IMR-90 (cell line): ENCODE measurements at regions of chr3 and their contacts with region 1.

Region 1: GRCh38 chr3:18401300-18401961 is 23.7 kb downstream of the SATB1 start:
- DNase-seq: no peak
- ATAC-seq: no peak
- H3K4me3 ChIP-seq: no peak overlapping the region
- H3K27ac ChIP-seq: no peak overlapping the region
- H3K4me1 ChIP-seq: no peaks in the 10 kb centered on the region
- H3K27me3 ChIP-seq: no peaks in the 10 kb centered on the region
- CTCF ChIP-seq: no peak
- POLR2A ChIP-seq: no peak
- RAD21 ChIP-seq: no peak

Region 2: DNA sequence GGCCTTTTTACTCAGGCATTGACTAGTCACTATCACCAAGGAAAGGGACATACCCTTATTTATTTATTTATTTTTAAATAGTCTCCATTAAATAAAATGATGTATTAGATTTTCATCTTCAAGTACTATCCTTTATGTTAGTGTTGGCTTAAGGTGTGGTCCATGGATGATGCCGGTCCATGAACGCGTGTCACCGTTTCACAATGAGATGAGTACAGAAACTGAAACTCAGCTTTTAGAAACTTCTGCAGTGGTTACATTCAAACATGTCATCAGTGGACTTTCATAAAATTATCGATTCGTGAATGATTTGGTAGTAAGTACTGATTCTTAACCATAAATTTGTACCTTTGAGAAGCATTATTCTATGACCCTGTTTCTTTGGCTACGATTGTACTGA is 142.9 kb before region 1 on chr3:
- CTCF ChIA-PET with region 1: no interaction called
- POLR2A ChIA-PET with region 1: interaction called, 10 read pairs
- dilution Hi-C with region 1: no loop called
- in situ Hi-C with region 1: no loop called
- intact Hi-C with region 1: no loop called
- DNase-seq: no peak
- ATAC-seq: no peak
- H3K4me3 ChIP-seq: no peak overlapping the region
- H3K27ac ChIP-seq: no peak overlapping the region
- H3K4me1 ChIP-seq: no peaks in the 10 kb centered on the region
- H3K27me3 ChIP-seq: no peaks in the 10 kb centered on the region
- CTCF ChIP-seq: no peak
- POLR2A ChIP-seq: no peak
- RAD21 ChIP-seq: no peak

Region 3: GRCh38 chr3:18900994-18901393 is 499.6 kb after region 1 on chr3:
- CTCF ChIA-PET with region 1: no interaction called
- POLR2A ChIA-PET with region 1: no interaction called
- dilution Hi-C with region 1: no loop called
- in situ Hi-C with region 1: no loop called
- intact Hi-C with region 1: no loop called
- DNase-seq: no peak
- ATAC-seq: no peak
- H3K4me3 ChIP-seq: no peak overlapping the region
- H3K27ac ChIP-seq: no peak overlapping the region
- H3K4me1 ChIP-seq: no peaks in the 10 kb centered on the region
- H3K27me3 ChIP-seq: no peaks in the 10 kb centered on the region
- CTCF ChIP-seq: no peak
- POLR2A ChIP-seq: no peak
- RAD21 ChIP-seq: no peak